ENCODE measurements at regions of chr6 and their contacts with region 1.

Region 1: DNA sequence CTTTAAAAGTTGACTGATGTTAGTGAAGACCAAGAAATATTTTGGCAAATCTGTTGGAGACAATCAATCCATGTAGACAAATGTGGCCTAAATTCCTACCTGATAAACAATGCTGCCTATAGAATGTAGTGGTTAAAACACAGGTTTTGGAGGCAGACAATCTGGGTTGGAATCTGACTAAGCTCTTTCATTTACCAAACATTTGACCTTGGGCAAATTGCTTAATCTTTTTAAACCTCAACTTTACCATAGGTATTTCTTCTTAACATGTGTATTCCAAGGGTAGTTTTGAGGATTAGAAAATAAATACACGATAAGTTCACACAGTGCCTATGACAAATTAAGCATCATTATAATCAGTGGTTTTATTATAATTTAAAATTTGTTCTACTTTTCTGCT is 11.5 kb downstream of the RHAG start:
- DNase-seq: no peak
- H3K4me3 ChIP-seq: no peak overlapping the region
- H3K27ac ChIP-seq: no peak overlapping the region
- H3K4me1 ChIP-seq: no peaks in the 10 kb centered on the region
- H3K27me3 ChIP-seq: no peaks in the 10 kb centered on the region
- CTCF ChIP-seq: no peak
- EP300 ChIP-seq: no peak
- POLR2A ChIP-seq: no peak

Region 2: DNA sequence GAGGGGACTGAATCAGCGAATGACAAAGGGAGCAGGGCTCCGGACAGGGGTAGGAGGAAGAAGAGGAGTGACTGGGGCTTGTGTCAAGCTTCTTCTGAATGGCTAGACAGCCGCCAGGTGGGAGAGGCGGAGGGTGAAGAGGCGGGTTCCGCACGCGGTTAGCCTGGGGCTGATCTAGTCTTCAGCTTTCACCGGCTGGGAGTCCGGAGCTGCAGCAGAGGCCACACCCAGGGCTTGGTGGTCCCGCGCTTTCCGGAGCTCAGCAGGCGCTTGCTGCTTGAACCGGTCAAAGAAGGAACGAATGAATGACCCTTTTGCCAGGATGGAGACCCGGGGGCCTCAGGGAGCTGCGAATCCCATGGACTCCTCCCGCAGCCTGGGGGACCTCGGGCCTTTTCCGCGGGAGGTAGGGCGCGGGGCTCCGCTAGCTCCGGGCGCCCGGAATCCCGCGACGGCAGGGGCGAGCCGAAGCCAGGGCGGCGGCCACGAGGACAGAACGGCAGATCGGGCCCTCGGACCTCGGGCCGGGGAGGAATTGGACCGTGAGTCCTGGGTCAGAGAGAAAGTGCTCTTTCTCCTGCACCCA is 74.6 kb before region 1 on chr6 and contains the start of gene C6orf141:
- intact Hi-C with region 1: no loop called
- DNase-seq: peak; percentile 31 to 77
- H3K4me3 ChIP-seq: peak within 1 kb of the TSS; percentile 40 to 57 (median 45)
- H3K27ac ChIP-seq: peak within 1 kb of the TSS in 1 of 5 donors; percentile 9
- H3K4me1 ChIP-seq: peaks cover 11 to 23% (median 22%) of the 10 kb centered on the region in 4 donors
- H3K27me3 ChIP-seq: peaks cover 0 to 47% (median 29%) of the 10 kb centered on the region in 3 donors
- CTCF ChIP-seq: no peak
- EP300 ChIP-seq: no peak
- POLR2A ChIP-seq: no peak
- total RNA-seq, gene C6orf141: 6.2 to 29.8 (median 23.8) TPM in 4 of 5 donors, not detected in the other

Region 3: DNA sequence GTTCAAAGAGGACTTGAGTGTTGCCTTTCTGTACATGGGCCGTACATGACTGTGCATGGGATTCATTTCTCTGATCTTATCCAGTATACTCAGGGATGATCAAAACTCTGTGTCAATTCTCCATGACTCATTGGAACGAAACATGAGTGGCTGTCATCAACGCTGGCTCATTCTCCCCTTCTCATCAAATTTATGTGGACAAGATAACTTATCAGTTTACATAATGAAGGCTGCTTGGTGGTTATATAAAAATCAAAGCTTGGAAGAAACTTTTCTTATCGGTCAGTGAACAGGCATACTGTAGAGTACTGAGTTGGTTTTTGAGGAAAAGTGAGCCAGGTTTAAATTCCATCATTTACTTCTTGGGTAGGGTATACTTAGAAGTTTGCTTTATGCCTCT is 216.3 kb after region 1 on chr6:
- intact Hi-C with region 1: loop called (anchors 5 kb)
- DNase-seq: no peak
- H3K4me3 ChIP-seq: no peak overlapping the region
- H3K27ac ChIP-seq: no peak overlapping the region
- H3K4me1 ChIP-seq: no peaks in the 10 kb centered on the region
- H3K27me3 ChIP-seq: no peaks in the 10 kb centered on the region
- CTCF ChIP-seq: no peak
- EP300 ChIP-seq: no peak
- POLR2A ChIP-seq: no peak

Region 4: DNA sequence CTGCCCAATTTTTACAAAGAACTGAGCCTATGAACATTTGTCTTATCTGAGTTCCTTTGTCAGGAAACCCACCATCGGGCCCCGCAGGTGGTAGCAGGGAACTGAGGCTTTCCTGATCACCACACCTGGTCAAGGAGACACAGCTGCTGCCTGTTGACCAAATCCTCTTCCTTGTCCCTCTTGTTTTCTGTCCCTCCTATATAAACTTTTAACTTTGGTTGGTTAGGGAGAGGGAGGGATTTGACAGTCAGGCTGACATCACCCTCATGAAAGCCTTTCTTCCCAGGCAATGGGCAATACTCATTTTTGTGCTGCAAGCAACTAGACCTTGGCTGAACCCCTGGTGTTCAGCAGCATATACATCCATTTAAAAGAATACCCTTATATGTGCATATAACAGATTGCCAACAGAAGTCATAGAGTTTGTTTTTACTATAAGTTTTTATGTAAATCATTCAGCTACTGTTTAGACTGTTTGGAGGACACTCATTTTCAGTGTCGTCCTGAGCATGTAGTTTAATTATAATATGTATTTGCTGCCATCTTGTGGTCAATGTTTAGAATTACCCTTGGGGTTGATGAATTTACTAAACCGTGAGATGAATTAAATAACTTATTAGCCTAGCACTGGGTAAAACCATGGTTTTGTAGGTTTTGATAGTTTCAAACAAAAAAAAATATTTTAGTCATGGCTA is 224.2 kb after region 1 on chr6:
- intact Hi-C with region 1: loop called (anchors 5 kb)
- DNase-seq: peak in 1 of 2 donors; percentile 68
- H3K4me3 ChIP-seq: no peak overlapping the region
- H3K27ac ChIP-seq: no peak overlapping the region
- H3K4me1 ChIP-seq: no peaks in the 10 kb centered on the region
- H3K27me3 ChIP-seq: peaks cover 0 to 4% (median 0%) of the 10 kb centered on the region in 3 donors
- CTCF ChIP-seq: peak in 5 of 7 experiments; percentile 18 to 69 (median 62)
- EP300 ChIP-seq: no peak
- POLR2A ChIP-seq: no peak

Measured in stomach (tissue), 19 donors.